Sigmoid colon (tissue), 7 donors: ENCODE measurements at regions of chr2 and their contacts with region 1.

Region 1: DNA sequence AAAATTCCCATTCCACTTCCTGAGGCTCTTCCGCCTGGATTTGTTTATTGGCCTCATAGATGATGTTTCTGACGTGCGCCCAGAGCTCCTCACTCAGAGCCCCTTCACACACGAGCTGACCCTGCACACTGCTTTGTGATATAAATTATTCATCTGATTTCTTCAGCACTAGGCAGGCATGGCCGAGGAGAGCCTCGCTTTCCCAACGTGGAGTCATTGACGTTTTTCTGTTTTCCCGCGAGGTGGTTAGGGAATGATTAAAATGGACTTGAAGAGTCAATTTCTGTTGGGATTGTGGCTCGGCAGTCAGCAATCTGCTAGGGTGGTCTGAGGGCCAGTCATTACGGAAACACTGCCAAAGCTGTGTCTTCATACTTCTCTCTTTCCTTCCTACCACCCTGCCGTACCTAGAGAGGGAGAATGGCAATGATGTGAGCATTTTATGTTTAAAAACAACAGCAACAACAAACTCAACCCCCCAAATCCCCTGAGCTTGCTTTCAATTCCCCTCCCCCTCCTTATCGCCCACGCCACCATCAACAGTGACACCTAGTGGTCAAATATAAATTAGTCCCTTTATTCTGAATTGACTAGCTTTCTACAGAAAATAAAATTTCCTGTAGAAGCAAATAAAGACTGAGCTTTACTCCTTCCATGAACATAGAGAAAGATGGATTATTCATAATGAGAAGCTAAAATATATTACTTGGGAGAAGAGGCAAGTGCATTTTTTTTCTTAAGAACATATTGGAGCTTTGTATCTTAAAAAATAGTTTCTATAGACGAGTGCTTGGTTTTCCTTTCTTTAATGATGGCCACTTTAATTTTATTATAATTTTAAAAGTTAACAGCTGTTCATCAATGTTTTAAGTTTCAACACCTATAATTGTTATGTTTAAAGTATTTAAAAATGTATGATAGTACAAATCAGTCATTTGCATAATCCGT is 285.1 kb downstream of the MTX2 start:
- DNase-seq: peak; percentile 68
- H3K4me3 ChIP-seq: peak overlapping the region; percentile 29 to 49 (median 38)
- H3K27ac ChIP-seq: peak overlapping the region; percentile 50 to 72 (median 67)
- H3K4me1 ChIP-seq: peaks cover 0 to 26% (median 19%) of the 10 kb centered on the region in 4 donors
- H3K27me3 ChIP-seq: no peaks in the 10 kb centered on the region
- CTCF ChIP-seq: peak; percentile 77 to 87 (median 82)
- EP300 ChIP-seq: no peak
- POLR2A ChIP-seq: no peak

Region 2: GRCh38 chr2:175181104-175181876 is 1373.1 kb before region 1 on chr2 and contains the start of gene ATP5MC3:
- intact Hi-C with region 1: loop called (anchors 10 kb)
- DNase-seq: peak; percentile 98
- H3K4me3 ChIP-seq: peak within 1 kb of the TSS; percentile 85 to 87 (median 86)
- H3K27ac ChIP-seq: peak within 1 kb of the TSS; percentile 86 to 98 (median 92)
- H3K4me1 ChIP-seq: peaks cover 0 to 31% (median 11%) of the 10 kb centered on the region in 4 donors
- H3K27me3 ChIP-seq: no peaks in the 10 kb centered on the region
- CTCF ChIP-seq: peak in 2 of 4 experiments; percentile 12 to 40
- EP300 ChIP-seq: no peak
- POLR2A ChIP-seq: peak; percentile 90 to 95
- total RNA-seq, gene ATP5MC3: 97.5 to 233 (median 163) TPM

Region 3: DNA sequence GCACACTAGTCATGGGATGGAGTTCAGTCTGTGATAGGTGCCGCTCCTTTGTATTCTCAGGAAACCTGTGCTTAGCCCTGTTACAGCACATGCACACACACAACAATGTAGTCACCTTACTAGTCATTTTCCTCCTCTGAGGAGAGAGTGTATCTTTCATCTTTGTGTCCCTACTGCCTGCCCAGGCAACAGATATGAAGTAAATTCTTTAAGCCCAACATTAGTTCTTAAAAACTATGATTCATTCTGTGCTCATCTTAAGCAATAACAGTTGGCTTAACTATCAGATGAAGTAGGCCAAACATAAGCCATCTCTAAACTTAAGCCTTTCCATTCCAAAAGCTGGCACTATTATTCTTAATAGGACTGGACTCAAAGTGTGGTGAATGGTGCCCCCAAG is 738.8 kb before region 1 on chr2:
- intact Hi-C with region 1: no loop called
- DNase-seq: no peak
- H3K4me3 ChIP-seq: no peak overlapping the region
- H3K27ac ChIP-seq: no peak overlapping the region
- H3K4me1 ChIP-seq: peaks cover 0 to 4% (median 0%) of the 10 kb centered on the region in 4 donors
- H3K27me3 ChIP-seq: no peaks in the 10 kb centered on the region
- CTCF ChIP-seq: no peak
- EP300 ChIP-seq: no peak
- POLR2A ChIP-seq: no peak

Region 4: DNA sequence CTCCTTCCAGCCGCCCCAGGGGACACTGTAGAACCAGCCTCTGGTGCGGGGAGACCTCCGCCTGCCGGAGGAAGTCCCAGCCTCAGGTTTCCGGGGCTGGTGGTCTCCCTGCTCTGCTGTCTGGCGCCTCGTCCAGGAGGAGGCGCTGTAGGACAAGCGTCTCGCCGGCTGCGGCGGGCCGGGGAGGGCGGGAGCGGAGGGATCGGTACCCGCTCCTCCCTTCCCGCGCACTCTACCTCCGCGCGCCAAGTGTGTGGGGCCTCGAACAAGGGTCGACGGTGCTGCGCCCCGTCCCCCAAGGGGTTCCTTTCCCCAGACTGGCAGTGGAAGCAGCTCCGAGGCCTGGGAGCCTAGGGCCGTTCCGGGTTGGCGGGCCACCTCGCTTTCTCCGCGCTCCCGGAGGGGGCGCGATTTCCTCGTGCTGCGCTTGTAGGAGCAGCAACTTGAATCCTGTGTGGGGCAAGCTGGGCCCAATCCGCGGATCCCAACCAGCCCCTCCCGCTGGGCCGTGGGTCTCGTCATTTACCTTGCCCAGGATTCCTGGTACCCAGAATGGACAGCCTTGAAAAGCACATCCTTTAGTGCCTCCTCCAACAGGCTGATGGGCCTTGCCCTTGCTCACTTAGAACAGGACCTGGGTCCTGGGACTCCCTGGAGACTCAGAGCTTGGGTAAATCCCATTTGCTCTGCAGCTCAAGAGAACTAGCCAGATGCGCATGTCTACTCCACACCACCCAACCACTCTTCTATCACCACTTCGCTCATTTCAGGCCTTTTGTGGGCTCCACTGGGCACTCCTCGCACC is 413.7 kb before region 1 on chr2:
- intact Hi-C with region 1: loop called (anchors 1 kb)
- DNase-seq: peak; percentile 87
- H3K4me3 ChIP-seq: peak overlapping the region; percentile 39 to 52 (median 50)
- H3K27ac ChIP-seq: peak overlapping the region; percentile 49 to 87 (median 54)
- H3K4me1 ChIP-seq: peaks cover 0 to 30% (median 24%) of the 10 kb centered on the region in 4 donors
- H3K27me3 ChIP-seq: peaks cover 3 to 69% (median 51%) of the 10 kb centered on the region in 3 donors
- CTCF ChIP-seq: peak; percentile 87 to 96 (median 95)
- EP300 ChIP-seq: no peak
- POLR2A ChIP-seq: no peak

Region 5: DNA sequence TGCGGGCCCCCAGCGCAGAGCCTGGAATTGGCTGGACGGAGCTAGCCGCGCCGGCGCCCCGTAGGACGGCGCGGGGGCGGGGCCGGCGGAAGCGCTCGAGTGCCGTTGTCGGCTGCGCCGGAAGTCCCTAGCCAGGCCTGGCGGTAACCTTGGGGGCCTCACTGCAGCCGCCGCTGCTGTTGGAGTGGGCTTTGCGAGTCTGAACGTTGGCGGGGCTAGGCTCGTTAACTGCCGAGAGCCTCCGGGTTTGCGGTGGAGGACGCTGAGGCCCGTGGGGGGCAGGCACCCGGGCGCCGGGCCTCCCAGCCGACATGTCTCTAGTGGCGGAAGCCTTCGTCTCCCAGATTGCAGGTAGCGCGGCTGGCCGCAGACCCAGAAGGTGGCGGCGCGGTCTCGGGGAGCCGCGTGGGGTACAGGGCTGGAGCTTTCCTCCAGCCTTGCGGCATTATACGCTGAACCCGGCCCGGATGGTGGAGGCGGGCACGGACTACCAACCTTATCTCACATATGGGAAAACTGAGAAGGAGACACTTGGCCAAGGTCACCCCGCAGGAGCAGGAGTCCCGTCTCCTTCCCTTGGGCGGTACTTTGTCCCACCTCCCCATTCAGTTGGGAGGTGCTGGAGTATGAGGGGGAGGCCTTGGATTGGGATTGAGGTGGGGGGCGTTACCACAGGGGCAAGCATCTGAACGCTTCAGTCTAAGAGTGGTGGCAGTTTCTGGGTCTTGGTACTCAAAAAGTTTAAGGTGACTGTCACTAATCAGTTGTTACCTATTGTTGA is 284.9 kb before region 1 on chr2 and contains the start of gene MTX2:
- intact Hi-C with region 1: loop called (anchors 5 kb)
- DNase-seq: peak; percentile 80
- H3K4me3 ChIP-seq: peak within 1 kb of the TSS; percentile 62 to 80 (median 69)
- H3K27ac ChIP-seq: peak within 1 kb of the TSS; percentile 80 to 90 (median 82)
- H3K4me1 ChIP-seq: peaks cover 0 to 13% (median 9%) of the 10 kb centered on the region in 4 donors
- H3K27me3 ChIP-seq: no peaks in the 10 kb centered on the region
- CTCF ChIP-seq: peak in 2 of 4 experiments; percentile 18 to 26
- EP300 ChIP-seq: no peak
- POLR2A ChIP-seq: peak; percentile 17 to 44
- total RNA-seq, gene MTX2: 34.5 to 49.5 (median 38.8) TPM

Region 6: GRCh38 chr2:176454893-176455811 is 99.2 kb before region 1 on chr2:
- intact Hi-C with region 1: loop called (anchors 2 kb)
- DNase-seq: peak; percentile 92
- H3K4me3 ChIP-seq: no peak overlapping the region
- H3K27ac ChIP-seq: peak overlapping the region; percentile 36 to 59 (median 53)
- H3K4me1 ChIP-seq: peaks cover 0 to 12% (median 0%) of the 10 kb centered on the region in 4 donors
- H3K27me3 ChIP-seq: no peaks in the 10 kb centered on the region
- CTCF ChIP-seq: peak; percentile 48 to 93 (median 82)
- EP300 ChIP-seq: no peak
- POLR2A ChIP-seq: no peak

Region 7: DNA sequence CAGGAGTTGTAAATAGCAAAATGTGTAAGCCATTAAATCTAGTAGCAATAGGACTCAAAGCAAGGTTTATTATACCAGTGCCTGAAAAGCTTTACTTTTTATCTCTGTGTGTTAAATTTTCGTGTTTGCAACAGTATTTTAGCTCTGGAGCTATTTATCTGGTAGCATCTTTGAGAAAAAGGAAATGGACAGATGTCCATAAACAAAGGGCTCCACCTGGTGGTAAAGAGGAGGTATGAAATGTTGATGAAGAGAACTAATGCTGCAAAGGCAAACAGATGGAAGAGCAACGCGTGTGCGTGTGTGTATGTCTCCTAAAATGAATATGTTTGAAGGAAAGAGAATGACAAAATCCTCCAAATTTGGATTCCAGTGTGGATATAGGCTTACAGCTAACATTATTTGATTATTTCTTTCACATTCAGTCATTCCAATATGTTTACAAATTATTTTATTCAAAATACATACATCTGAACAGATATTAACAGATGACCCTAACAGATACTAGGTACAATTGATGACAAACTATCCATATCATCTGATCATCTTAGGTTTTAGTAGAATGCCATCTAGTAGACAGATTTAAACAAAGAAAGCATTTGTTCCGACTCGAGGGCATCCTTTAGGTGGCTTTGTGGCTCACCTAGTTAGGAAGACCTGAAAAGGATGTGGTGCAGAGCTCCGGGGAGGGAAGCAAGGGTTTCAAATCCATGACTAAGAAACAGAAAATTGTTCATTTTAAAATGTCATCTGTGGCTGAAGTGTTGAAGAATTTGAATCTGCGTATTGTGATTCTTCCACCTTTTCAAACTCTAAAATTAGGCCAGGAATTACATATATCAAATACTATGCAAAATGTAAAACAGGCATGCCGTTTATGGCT is 98.2 kb after region 1 on chr2:
- intact Hi-C with region 1: no loop called
- DNase-seq: no peak
- H3K4me3 ChIP-seq: no peak overlapping the region
- H3K27ac ChIP-seq: no peak overlapping the region
- H3K4me1 ChIP-seq: peaks cover 0 to 12% (median 5%) of the 10 kb centered on the region in 4 donors
- H3K27me3 ChIP-seq: peaks cover 0 to 4% (median 0%) of the 10 kb centered on the region in 3 donors
- CTCF ChIP-seq: peak; percentile 59 to 77 (median 62)
- EP300 ChIP-seq: no peak
- POLR2A ChIP-seq: no peak